ENCODE measurements at regions of chr19 and their contacts with region 1.

Region 1: DNA sequence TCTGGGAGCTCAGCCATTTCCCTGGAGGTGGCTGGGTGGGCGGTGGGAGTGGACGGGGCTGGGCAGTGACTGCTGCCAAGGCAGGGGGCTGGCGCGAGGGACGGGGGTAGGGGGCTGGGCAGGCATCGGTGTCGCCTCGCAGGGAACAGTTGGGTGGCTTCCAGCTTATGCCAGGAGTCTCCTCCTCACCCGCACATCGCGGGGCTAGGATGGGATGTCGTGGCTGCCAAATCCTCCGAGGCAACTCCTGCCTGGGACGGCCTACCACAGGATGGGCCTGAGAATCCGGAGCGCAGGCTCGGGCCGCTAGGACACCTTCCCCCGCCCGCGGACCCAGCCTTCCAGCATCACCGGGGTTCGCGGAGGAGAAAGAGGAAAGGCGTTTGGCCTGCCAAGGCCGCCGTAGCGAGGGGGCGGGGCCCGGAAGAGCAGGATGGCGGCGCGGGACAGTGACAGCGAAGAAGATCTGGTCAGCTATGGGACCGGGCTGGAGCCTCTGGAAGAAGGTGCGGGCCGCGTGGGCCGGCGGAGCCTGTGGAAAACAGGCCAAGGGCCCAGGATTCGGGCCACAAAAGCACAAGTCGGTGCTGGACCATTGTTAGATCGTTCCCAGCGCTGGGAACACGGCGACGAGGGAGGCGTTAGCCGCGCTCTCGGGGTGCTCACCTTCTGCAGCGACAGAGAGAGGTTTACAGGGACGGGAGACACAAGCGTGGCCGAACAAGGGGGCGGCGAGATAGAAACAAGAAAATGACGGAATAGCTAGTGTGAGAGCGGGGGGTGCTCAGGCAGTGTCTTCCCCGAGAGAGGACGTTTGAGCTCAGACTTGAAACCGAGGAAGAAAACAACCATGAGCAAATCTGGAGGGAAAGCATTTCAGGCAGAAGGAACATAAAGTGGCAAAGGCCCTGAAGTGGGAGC is at the start of gene GPATCH1:
- DNase-seq: peak; percentile 90
- H3K4me3 Mint-ChIP-seq: peak within 1 kb of the TSS; percentile 87
- H3K27ac Mint-ChIP-seq: peak within 1 kb of the TSS; percentile 86
- H3K4me1 Mint-ChIP-seq: peaks cover 16% of the 10 kb centered on the region
- H3K27me3 Mint-ChIP-seq: no peaks in the 10 kb centered on the region
- CTCF ChIP-seq: no peak
- total RNA-seq, gene GPATCH1: 5.1 and 6.6 TPM in 2 replicates

Region 2: GRCh38 chr19:33052352-33052972 is 28.6 kb before region 1 on chr19:
- CTCF ChIA-PET with region 1: no interaction called
- POLR2A ChIA-PET with region 1: interaction called, 15 read pairs
- intact Hi-C with region 1: no loop called
- DNase-seq: peak; percentile 79
- H3K4me3 Mint-ChIP-seq: no peak overlapping the region
- H3K27ac Mint-ChIP-seq: peak overlapping the region; percentile 87
- H3K4me1 Mint-ChIP-seq: peaks cover 15% of the 10 kb centered on the region
- H3K27me3 Mint-ChIP-seq: no peaks in the 10 kb centered on the region
- CTCF ChIP-seq: no peak

Region 3: GRCh38 chr19:33064792-33065550 is 16.1 kb before region 1 on chr19 and contains the start of gene RHPN2:
- CTCF ChIA-PET with region 1: interaction called, 6 read pairs
- POLR2A ChIA-PET with region 1: interaction called, 10 read pairs
- intact Hi-C with region 1: no loop called
- DNase-seq: peak; percentile 78
- H3K4me3 Mint-ChIP-seq: peak within 1 kb of the TSS; percentile 70
- H3K27ac Mint-ChIP-seq: no peak within 1 kb of the TSS
- H3K4me1 Mint-ChIP-seq: no peaks in the 10 kb centered on the region
- H3K27me3 Mint-ChIP-seq: no peaks in the 10 kb centered on the region
- CTCF ChIP-seq: no peak
- total RNA-seq, gene RHPN2: 4.9 and 5.5 TPM in 2 replicates

Measured in MCF 10A (cell line).